Naive thymus-derived CD4-positive, alpha-beta T cell (primary cell): ENCODE measurements at regions of chr1 and their contacts with region 1.

Region 1: DNA sequence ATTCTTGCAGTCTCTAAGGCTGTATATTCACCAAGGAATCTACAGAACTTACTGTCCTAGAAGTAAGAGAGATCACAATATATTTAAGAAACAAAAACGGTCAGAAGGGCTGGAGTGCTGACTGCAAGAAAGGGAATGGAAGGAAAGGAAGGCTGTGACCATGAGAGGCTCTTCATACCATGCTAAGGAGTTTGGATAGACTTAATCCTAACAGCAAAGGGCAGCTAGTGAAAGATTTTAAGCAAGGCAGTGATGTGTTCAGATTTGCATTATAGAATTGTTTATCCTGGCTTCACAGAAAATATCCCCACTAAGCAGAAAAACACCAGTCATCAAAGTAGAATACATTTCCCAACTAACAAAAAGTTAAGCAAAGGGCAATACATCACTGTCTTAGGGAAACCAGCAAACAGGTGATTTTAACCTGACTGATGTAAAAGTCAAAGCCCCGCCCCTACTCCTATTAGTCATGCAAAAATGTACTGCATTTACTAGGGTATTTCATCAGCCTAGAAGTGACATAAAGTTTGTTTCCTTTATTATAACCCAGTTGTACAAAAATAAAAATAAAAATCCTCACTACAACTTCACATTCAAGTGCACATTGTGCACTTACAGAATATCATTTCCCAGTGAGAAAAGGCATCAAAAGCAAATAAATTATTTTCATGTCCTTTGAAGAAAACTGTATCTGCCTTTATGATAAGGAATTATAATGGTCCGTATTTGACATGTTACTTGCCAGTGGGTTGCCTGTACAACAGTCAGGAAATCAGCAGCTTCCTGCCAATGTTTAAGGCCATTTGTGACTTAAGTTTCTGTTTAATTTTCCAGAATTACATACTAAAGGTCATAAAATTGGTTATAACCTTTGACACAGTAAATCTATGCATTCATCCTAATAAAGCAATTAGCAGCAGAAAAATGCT is 17.2 kb downstream of the JAK1 start:
- DNase-seq: peak in 1 of 9 donors; percentile 42
- ATAC-seq: peak; percentile 72
- H3K4me3 ChIP-seq: no peak overlapping the region
- H3K4me3 Mint-ChIP-seq: peak overlapping the region; percentile 2 to 69 (median 26)
- H3K27ac ChIP-seq: no peak overlapping the region
- H3K27ac Mint-ChIP-seq: peak overlapping the region in 7 of 9 donors; percentile 2 to 81 (median 19)
- H3K4me1 ChIP-seq: peaks cover 56 to 58% of the 10 kb centered on the region in 2 donors
- H3K4me1 Mint-ChIP-seq: peaks cover 62 to 86% (median 72%) of the 10 kb centered on the region in 7 donors
- H3K27me3 ChIP-seq: no peaks in the 10 kb centered on the region
- H3K27me3 Mint-ChIP-seq: no peaks in the 10 kb centered on the region

Region 2: DNA sequence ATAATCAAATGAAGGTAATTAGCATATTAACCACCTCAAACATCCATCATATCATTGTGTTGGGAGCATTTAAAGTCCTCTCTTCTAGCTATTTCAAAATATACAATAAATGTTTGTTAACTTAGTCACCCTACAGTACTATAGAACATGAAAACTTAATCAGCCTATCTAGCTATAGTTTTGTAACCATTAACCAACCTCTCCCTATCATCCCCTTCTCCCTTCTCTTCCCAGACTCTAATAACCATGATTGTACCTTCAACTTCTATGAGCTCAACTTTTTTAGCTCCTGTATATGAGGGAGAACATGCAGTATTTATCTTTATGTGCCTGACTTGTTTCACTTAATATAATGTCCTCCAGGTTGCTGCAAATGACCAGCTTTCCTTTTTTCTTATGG is 150.3 kb before region 1 on chr1:
- CTCF ChIA-PET with region 1: no interaction called
- POLR2A ChIA-PET with region 1: no interaction called
- intact Hi-C with region 1: no loop called
- DNase-seq: no peak
- ATAC-seq: no peak
- H3K4me3 ChIP-seq: no peak overlapping the region
- H3K4me3 Mint-ChIP-seq: no peak overlapping the region
- H3K27ac ChIP-seq: no peak overlapping the region
- H3K27ac Mint-ChIP-seq: no peak overlapping the region
- H3K4me1 ChIP-seq: no peaks in the 10 kb centered on the region
- H3K4me1 Mint-ChIP-seq: peaks cover 0 to under 1% (median 0%) of the 10 kb centered on the region in 7 donors
- H3K27me3 ChIP-seq: no peaks in the 10 kb centered on the region
- H3K27me3 Mint-ChIP-seq: peaks cover 0 to 5% (median 0%) of the 10 kb centered on the region in 5 donors

Region 3: DNA sequence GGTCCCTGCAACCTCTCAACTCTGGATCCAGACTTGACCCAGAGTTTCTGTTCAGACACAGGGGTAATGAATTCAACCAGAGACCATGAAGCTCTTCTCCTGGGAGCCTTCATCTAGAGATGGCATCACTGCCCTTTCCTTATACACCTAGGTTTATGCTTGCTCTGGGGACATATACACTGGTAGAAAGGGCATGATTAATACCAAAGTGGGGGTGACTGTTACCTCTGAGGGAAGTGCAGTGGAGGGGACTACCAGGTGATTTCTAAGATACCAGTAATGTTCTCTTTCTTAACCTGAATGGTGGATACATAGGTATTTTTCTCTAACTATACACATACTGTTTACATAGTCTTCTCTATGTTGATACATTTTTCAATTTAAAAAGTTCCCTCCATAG is 31.3 kb before region 1 on chr1:
- CTCF ChIA-PET with region 1: no interaction called
- POLR2A ChIA-PET with region 1: no interaction called
- intact Hi-C with region 1: no loop called
- DNase-seq: no peak
- ATAC-seq: no peak
- H3K4me3 ChIP-seq: no peak overlapping the region
- H3K4me3 Mint-ChIP-seq: peak overlapping the region; percentile 9 to 77 (median 58)
- H3K27ac ChIP-seq: no peak overlapping the region
- H3K27ac Mint-ChIP-seq: peak overlapping the region in 8 of 9 donors; percentile 1 to 83 (median 66)
- H3K4me1 ChIP-seq: peaks cover 53 to 65% of the 10 kb centered on the region in 2 donors
- H3K4me1 Mint-ChIP-seq: peaks cover 66 to 99% (median 93%) of the 10 kb centered on the region in 7 donors
- H3K27me3 ChIP-seq: no peaks in the 10 kb centered on the region
- H3K27me3 Mint-ChIP-seq: no peaks in the 10 kb centered on the region

Region 4: DNA sequence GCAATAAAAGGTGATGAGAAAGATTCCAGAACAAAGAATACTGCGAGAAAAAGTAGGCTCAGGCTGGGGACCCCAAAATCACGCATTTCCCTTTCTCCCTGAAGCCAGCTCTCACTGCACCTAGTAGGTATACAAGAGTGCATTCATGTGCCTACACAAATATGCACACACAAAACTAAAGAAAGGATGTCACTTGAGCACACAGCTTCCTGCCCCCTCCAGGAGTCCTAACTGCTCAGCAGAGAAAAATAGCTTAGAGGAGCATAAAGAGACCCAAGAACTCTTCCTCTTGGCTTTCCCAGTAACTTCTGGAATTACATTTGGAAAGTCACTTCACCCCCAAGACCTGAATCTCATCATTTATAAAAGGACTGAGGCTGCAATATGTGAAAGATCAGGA is 20.8 kb before region 1 on chr1:
- CTCF ChIA-PET with region 1: no interaction called
- POLR2A ChIA-PET with region 1: interaction called, 3 read pairs
- intact Hi-C with region 1: loop called in 1 of 2 experiments (anchors 2 kb)
- DNase-seq: no peak
- ATAC-seq: no peak
- H3K4me3 ChIP-seq: no peak overlapping the region
- H3K4me3 Mint-ChIP-seq: peak overlapping the region in 9 of 10 donors; percentile 22 to 66 (median 57)
- H3K27ac ChIP-seq: no peak overlapping the region
- H3K27ac Mint-ChIP-seq: peak overlapping the region in 8 of 9 donors; percentile 17 to 73 (median 41)
- H3K4me1 ChIP-seq: peaks cover 53 to 57% of the 10 kb centered on the region in 2 donors
- H3K4me1 Mint-ChIP-seq: peaks cover 63 to 95% (median 89%) of the 10 kb centered on the region in 7 donors
- H3K27me3 ChIP-seq: no peaks in the 10 kb centered on the region
- H3K27me3 Mint-ChIP-seq: no peaks in the 10 kb centered on the region

Region 5: GRCh38 chr1:64933296-64934070 is 15.7 kb before region 1 on chr1:
- CTCF ChIA-PET with region 1: no interaction called
- POLR2A ChIA-PET with region 1: no interaction called
- intact Hi-C with region 1: loop called in 1 of 2 experiments (anchors 1 kb)
- DNase-seq: peak in 6 of 9 donors; percentile 16 to 40 (median 28)
- ATAC-seq: peak; percentile 76
- H3K4me3 ChIP-seq: no peak overlapping the region
- H3K4me3 Mint-ChIP-seq: peak overlapping the region in 9 of 10 donors; percentile 43 to 80 (median 60)
- H3K27ac ChIP-seq: no peak overlapping the region
- H3K27ac Mint-ChIP-seq: peak overlapping the region in 8 of 9 donors; percentile 4 to 74 (median 49)
- H3K4me1 ChIP-seq: peaks cover 32 to 42% of the 10 kb centered on the region in 2 donors
- H3K4me1 Mint-ChIP-seq: peaks cover 44 to 94% (median 85%) of the 10 kb centered on the region in 7 donors
- H3K27me3 ChIP-seq: no peaks in the 10 kb centered on the region
- H3K27me3 Mint-ChIP-seq: no peaks in the 10 kb centered on the region